GM10248 (cell line): ENCODE measurements at regions of chr1 and their contacts with region 1.

Region 1: GRCh38 chr1:224713228-224713627 is 97.1 kb downstream of the CNIH3 start:
- DNase-seq: no peak
- CTCF ChIP-seq: no peak

Region 2: DNA sequence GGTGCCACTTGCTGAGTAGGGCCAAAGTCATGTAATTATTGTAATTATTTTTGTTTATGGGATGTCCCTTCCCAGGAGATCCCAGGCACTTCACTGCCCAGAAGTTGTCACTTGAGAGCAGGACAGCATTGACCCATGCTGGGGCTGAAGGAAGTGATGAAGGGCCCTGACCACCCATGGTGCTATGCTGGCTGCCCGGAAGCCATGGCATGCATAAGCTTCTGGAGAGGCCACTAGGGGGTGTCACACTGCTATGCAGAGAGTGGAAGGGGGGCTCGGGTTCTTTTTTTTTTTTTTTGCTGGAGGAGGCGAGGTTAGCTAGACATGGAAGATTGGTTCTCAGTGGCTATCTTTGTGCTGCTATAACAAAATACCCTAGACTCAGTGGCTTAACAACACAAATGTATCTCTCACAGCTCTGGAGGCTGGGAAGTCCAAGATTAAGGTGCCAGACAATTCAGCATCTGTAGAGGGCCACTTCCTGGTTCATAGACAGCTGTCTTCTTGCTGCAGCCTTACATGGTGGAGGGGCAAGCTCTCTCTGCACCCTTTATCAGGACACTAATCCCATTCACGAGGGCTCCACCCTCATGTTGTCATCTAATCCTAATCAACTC is 12.2 kb before region 1 on chr1:
- CTCF ChIA-PET with region 1: interaction called, 11 read pairs
- POLR2A ChIA-PET with region 1: no interaction called
- DNase-seq: peak; percentile 53
- CTCF ChIP-seq: peak; percentile 30